Transverse colon (tissue), 4 donors: ENCODE measurements at regions of chr17 and their contacts with region 1.

Region 1: DNA sequence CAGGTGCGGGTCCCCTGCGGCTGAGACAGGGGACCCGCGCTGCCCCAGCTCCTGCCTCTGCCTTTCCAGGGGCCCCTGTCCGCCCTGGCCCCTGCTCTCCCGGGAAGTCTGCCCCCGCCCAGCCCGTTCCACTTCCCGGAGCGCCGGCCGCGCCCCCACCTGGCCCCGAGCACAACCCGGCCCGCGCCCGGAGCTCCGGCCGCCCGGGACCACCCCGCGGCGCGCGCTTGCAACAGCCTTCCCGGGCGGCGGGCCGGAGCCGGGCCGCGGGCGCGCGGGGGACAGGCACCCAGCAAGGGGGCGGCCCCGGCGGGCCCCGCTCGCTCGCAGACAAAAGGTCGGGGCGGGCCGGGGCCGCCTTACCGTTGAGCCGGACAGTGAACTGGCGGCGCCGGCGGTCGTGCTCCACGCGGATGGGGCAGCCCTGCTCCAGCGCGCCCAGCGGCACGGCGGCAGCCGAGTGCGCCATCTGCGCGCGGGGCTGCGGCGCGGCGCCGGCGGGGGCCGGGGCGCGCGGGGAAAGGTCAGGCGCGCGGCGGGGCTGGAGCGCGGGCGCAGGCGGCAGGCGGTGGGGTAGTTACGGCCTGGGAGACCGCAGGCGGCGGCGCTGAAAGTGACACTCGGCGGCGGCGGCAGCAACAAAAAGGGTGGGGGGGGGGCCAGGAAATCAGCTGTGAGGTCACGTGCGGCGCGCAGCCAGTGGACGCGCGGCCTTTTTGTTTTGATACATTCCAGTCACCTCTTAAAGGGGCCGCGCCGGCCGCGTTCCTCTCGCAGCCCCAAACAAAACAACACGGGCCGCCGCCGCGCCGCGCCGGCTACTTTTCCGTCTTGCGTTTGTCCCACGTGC is at the start of gene NATD1:
- DNase-seq: peak; percentile 88
- H3K4me3 ChIP-seq: peak within 1 kb of the TSS; percentile 59 to 91 (median 70)
- H3K27ac ChIP-seq: peak within 1 kb of the TSS; percentile 60 to 72 (median 64)
- H3K4me1 ChIP-seq: peaks cover 4 to 22% (median 18%) of the 10 kb centered on the region in 4 donors
- H3K27me3 ChIP-seq: no peaks in the 10 kb centered on the region
- CTCF ChIP-seq: no peak
- EP300 ChIP-seq: no peak
- POLR2A ChIP-seq: peak; percentile 20
- total RNA-seq, gene NATD1: 1.4 to 7.9 (median 5.0) TPM

Region 2: GRCh38 chr17:21275579-21276263 is 22.7 kb after region 1 on chr17:
- in situ Hi-C with region 1: no loop called
- intact Hi-C with region 1: loop called (anchors 2 kb)
- DNase-seq: peak; percentile 97
- H3K4me3 ChIP-seq: peak overlapping the region; percentile 45 to 62 (median 59)
- H3K27ac ChIP-seq: peak overlapping the region; percentile 63 to 85 (median 81)
- H3K4me1 ChIP-seq: peaks cover 6 to 24% (median 15%) of the 10 kb centered on the region in 4 donors
- H3K27me3 ChIP-seq: no peaks in the 10 kb centered on the region
- CTCF ChIP-seq: peak in 2 of 5 experiments; percentile 6 to 8
- EP300 ChIP-seq: no peak
- POLR2A ChIP-seq: peak; percentile 64

Region 3: GRCh38 chr17:21318439-21318838 is 65.4 kb after region 1 on chr17:
- in situ Hi-C with region 1: loop called in 1 of 4 experiments (anchors 10 kb)
- intact Hi-C with region 1: no loop called
- DNase-seq: no peak
- H3K4me3 ChIP-seq: no peak overlapping the region
- H3K27ac ChIP-seq: no peak overlapping the region
- H3K4me1 ChIP-seq: peaks cover 0 to 23% (median 14%) of the 10 kb centered on the region in 4 donors
- H3K27me3 ChIP-seq: no peaks in the 10 kb centered on the region
- CTCF ChIP-seq: no peak
- EP300 ChIP-seq: no peak
- POLR2A ChIP-seq: no peak